Tibial artery (tissue), 4 donors: ENCODE measurements at regions of chr1 and their contacts with region 1.

Region 1: DNA sequence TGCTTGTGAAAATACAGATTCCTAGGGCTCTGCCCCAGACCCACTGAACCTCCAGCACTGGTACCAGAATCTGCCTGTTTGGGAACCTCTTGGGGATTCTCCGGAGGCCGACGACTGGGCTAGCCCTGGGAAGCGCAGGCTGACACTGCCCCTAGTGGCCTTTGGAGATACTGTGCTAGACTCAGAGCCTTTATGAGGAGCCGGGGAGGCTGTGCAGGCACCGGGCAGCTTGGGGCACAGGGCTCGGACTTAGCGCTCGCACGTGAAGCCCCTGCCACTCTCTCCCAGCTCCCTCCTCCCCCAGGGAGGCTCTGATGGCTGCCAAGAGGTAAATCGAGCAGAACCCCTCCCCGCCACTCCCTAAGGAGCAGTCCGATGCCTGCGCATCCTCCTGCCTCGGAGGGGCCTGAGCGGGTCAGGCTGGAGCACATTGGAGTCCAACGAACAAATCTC is 144.6 kb upstream of the TNR start:
- DNase-seq: peak; percentile 39 to 76
- H3K4me3 ChIP-seq: no peak overlapping the region
- H3K27ac ChIP-seq: no peak overlapping the region
- H3K4me1 ChIP-seq: peaks cover 0 to 39% (median 19%) of the 10 kb centered on the region in 4 donors
- H3K27me3 ChIP-seq: no peaks in the 10 kb centered on the region
- CTCF ChIP-seq: peak; percentile 86 to 87

Region 2: DNA sequence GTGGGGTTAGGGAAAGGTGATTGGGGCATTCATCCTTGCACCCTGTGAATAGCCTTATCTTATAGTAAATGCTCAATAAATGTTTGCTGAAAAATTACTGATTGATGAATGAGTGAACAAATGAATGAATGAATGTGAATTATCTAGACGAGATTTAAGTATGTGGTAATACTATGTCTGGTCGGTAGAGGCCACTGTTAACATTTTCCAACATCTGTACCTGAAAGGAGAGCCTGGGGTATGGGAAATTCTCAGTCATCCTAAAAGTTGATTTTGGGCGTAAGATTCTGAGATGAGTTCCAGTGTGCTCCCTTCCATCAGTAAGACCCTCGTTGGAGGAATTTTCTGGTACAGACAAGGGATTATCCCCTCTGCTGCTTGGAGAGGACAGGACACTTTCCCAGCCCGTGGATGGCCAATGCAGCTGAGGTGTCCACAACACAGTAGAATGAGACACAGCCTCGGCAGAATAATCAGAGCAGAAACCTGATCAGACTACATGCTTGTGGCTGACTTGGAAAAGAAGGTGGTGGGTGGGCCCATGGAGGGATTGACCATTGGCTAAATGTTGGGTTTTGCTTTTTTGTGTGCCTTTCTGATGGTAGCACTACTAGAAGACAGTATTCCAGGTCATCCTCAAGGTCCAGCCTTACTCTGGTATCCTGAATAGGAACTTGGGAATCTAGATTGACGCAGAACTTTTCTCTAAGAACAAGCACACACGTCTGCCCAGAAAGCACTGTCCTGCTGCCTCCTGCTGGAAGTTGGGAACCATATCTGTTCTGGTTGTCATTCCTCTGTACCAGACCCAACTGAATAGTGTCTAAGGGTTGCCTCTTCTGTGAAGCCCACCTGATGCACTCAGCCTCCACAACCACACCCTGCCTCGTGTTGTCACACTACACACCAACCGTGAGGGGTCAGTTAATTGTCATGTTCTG is 406.6 kb before region 1 on chr1:
- intact Hi-C with region 1: loop called (anchors 5 kb)
- DNase-seq: no peak
- H3K4me3 ChIP-seq: no peak overlapping the region
- H3K27ac ChIP-seq: no peak overlapping the region
- H3K4me1 ChIP-seq: peaks cover 0 to 4% (median 0%) of the 10 kb centered on the region in 4 donors
- H3K27me3 ChIP-seq: no peaks in the 10 kb centered on the region
- CTCF ChIP-seq: peak; percentile 57 to 71

Region 3: GRCh38 chr1:176073524-176074157 is 185.6 kb after region 1 on chr1:
- intact Hi-C with region 1: loop called (anchors 10 kb)
- DNase-seq: no peak
- H3K4me3 ChIP-seq: no peak overlapping the region
- H3K27ac ChIP-seq: no peak overlapping the region
- H3K4me1 ChIP-seq: peaks cover 0 to 9% (median 0%) of the 10 kb centered on the region in 4 donors
- H3K27me3 ChIP-seq: no peaks in the 10 kb centered on the region
- CTCF ChIP-seq: peak; percentile 61 to 74

Region 4: GRCh38 chr1:177164380-177165068 is 1276.5 kb after region 1 on chr1 and contains the start of gene ASTN1:
- intact Hi-C with region 1: no loop called
- DNase-seq: no peak
- H3K4me3 ChIP-seq: peak within 1 kb of the TSS in 1 of 2 donors; percentile 35
- H3K27ac ChIP-seq: no peak within 1 kb of the TSS
- H3K4me1 ChIP-seq: peaks cover 0 to 12% (median 11%) of the 10 kb centered on the region in 4 donors
- H3K27me3 ChIP-seq: peaks cover 0 to 40% of the 10 kb centered on the region in 2 donors
- CTCF ChIP-seq: no peak